HepG2 (cell line): ENCODE measurements at regions of chr4 and their contacts with region 1.

Region 1: GRCh38 chr4:31370866-31371465 is 650.8 kb downstream of the PCDH7 start:
- DNase-seq: peak; percentile 37
- ATAC-seq: peak; percentile 81
- H3K4me3 ChIP-seq: no peak overlapping the region
- H3K27ac ChIP-seq: no peak overlapping the region
- H3K4me1 ChIP-seq: no peaks in the 10 kb centered on the region
- H3K27me3 ChIP-seq: no peaks in the 10 kb centered on the region
- CTCF ChIP-seq: peak; percentile 74
- EP300 ChIP-seq: no peak
- POLR2A ChIP-seq: no peak
- RAD21 ChIP-seq: no peak

Region 2: GRCh38 chr4:31442236-31442635 is 71.3 kb after region 1 on chr4:
- CTCF ChIA-PET with region 1: no interaction called
- POLR2A ChIA-PET with region 1: no interaction called
- in situ Hi-C with region 1: no loop called
- intact Hi-C with region 1: loop called (anchors 1 kb)
- DNase-seq: peak; percentile 1
- ATAC-seq: no peak
- H3K4me3 ChIP-seq: no peak overlapping the region
- H3K27ac ChIP-seq: no peak overlapping the region
- H3K4me1 ChIP-seq: no peaks in the 10 kb centered on the region
- H3K27me3 ChIP-seq: no peaks in the 10 kb centered on the region
- CTCF ChIP-seq: 0 out of 2 replicates have a peak, but pooled peaks have one; percentile 11
- EP300 ChIP-seq: no peak
- POLR2A ChIP-seq: no peak
- RAD21 ChIP-seq: no peak

Region 3: GRCh38 chr4:31674313-31674947 is 303.5 kb after region 1 on chr4:
- CTCF ChIA-PET with region 1: no interaction called
- POLR2A ChIA-PET with region 1: no interaction called
- in situ Hi-C with region 1: no loop called
- intact Hi-C with region 1: loop called (anchors 1 kb)
- DNase-seq: no peak
- ATAC-seq: no peak
- H3K4me3 ChIP-seq: no peak overlapping the region
- H3K27ac ChIP-seq: no peak overlapping the region
- H3K4me1 ChIP-seq: no peaks in the 10 kb centered on the region
- H3K27me3 ChIP-seq: no peaks in the 10 kb centered on the region
- CTCF ChIP-seq: no peak; the same call in 1 of the 2 replicates
- EP300 ChIP-seq: no peak
- POLR2A ChIP-seq: no peak
- RAD21 ChIP-seq: no peak

Region 4: DNA sequence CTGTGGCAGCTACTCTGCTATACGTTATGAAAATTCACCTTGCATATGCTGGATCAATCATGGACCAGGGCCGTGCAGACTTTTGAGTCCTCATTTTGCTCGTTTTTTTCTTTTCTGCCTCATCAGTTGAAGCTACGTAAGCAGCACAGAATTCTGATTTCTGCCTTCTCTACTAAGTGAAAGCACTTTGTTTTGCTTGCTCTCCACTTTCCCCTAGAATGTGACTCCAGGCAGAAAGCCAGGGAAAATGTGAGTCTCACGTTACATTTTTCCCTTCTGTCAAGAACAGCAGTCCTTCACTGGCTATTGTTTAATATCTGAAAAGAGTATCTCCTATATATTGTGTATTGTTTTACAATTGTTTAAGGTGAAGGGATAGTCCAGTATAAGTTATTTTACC is 1189.3 kb after region 1 on chr4:
- CTCF ChIA-PET with region 1: no interaction called
- POLR2A ChIA-PET with region 1: no interaction called
- in situ Hi-C with region 1: no loop called
- intact Hi-C with region 1: no loop called
- DNase-seq: no peak
- ATAC-seq: no peak
- H3K4me3 ChIP-seq: no peak overlapping the region
- H3K27ac ChIP-seq: no peak overlapping the region
- H3K4me1 ChIP-seq: no peaks in the 10 kb centered on the region
- H3K27me3 ChIP-seq: no peaks in the 10 kb centered on the region
- CTCF ChIP-seq: no peak
- EP300 ChIP-seq: no peak
- POLR2A ChIP-seq: no peak
- RAD21 ChIP-seq: no peak